Pancreas (tissue), 10 donors: ENCODE measurements at regions of chr18 and their contacts with region 1.

Region 1: DNA sequence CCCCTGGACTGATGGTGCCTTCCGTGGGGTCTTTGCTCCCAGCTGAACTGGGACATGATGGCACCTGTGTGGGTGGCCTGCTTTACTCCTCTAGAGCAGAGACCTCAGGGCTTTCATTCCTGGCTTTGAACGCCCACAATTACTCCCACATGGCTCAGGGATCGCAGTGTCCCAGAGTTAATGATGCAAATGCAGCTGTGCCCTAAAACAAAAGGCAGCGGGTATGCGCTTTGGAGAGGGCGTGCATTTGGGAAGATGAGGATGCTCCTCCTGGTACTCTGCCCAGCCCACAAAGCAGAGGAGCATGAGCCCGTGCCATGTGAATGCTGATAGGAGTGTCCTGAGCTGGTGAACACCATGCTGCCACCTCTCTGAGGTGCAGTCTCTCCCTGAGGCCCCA is 173.4 kb downstream of the FHOD3 start:
- DNase-seq: no peak
- ATAC-seq: no peak
- H3K4me3 ChIP-seq: no peak overlapping the region
- H3K27ac ChIP-seq: no peak overlapping the region
- H3K4me1 ChIP-seq: peaks cover 0 to 17% (median 8%) of the 10 kb centered on the region in 3 donors
- H3K27me3 ChIP-seq: no peaks in the 10 kb centered on the region
- CTCF ChIP-seq: no peak

Region 2: GRCh38 chr18:36212301-36213171 is 258.4 kb before region 1 on chr18:
- intact Hi-C with region 1: no loop called
- DNase-seq: no peak
- ATAC-seq: no peak
- H3K4me3 ChIP-seq: no peak overlapping the region
- H3K27ac ChIP-seq: no peak overlapping the region
- H3K4me1 ChIP-seq: no peaks in the 10 kb centered on the region
- H3K27me3 ChIP-seq: no peaks in the 10 kb centered on the region
- CTCF ChIP-seq: no peak

Region 3: GRCh38 chr18:36411745-36412168 is 59.1 kb before region 1 on chr18:
- intact Hi-C with region 1: no loop called
- DNase-seq: no peak
- ATAC-seq: peak in 1 of 4 donors; percentile 69
- H3K4me3 ChIP-seq: no peak overlapping the region
- H3K27ac ChIP-seq: no peak overlapping the region
- H3K4me1 ChIP-seq: no peaks in the 10 kb centered on the region
- H3K27me3 ChIP-seq: no peaks in the 10 kb centered on the region
- CTCF ChIP-seq: no peak

Region 4: DNA sequence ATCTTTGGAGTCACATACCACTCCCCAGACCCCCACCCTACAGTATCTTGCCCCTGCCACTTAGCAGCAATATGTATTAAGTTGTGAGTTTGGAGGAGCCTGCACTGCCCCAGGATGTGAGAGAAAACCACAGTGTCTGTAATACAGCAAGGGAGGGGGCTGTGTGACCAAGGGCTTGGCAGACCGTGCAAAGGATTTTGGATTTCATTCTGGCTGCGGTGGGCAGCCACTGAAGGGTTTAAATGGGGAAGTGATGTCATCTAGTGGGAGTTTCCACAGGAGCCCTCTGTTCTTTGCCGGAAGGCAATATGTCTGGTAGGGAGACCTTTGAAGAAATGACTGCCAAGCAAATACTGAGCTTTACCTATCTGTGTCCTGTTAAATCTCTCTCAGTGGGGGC is 29.0 kb after region 1 on chr18:
- intact Hi-C with region 1: no loop called
- DNase-seq: no peak
- ATAC-seq: no peak
- H3K4me3 ChIP-seq: no peak overlapping the region
- H3K27ac ChIP-seq: no peak overlapping the region
- H3K4me1 ChIP-seq: no peaks in the 10 kb centered on the region
- H3K27me3 ChIP-seq: no peaks in the 10 kb centered on the region
- CTCF ChIP-seq: no peak

Region 5: GRCh38 chr18:36527740-36528455 is 57.0 kb after region 1 on chr18:
- intact Hi-C with region 1: loop called in 1 of 3 experiments (anchors 10 kb)
- DNase-seq: no peak
- ATAC-seq: no peak
- H3K4me3 ChIP-seq: no peak overlapping the region
- H3K27ac ChIP-seq: no peak overlapping the region
- H3K4me1 ChIP-seq: no peaks in the 10 kb centered on the region
- H3K27me3 ChIP-seq: no peaks in the 10 kb centered on the region
- CTCF ChIP-seq: no peak

Region 6: DNA sequence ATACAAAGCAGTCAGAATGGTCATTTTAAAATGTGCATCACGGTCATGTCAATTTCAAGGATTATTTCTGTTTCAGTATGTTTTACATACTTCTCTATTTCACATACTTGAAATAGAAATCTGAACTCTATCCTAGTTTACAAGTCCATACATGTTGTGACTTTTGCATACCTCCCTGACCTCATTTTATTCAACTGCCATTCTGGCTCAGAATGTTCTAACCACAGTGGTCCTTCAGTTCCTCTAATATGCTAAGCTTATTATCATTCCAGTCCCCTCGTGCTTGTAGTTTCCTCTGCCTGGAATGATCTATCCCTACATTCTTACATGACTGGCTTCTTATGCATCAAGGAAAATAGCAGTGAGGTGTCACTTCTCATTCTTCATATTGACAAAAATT is 653.6 kb after region 1 on chr18:
- intact Hi-C with region 1: no loop called
- DNase-seq: no peak
- ATAC-seq: no peak
- H3K4me3 ChIP-seq: no peak overlapping the region
- H3K27ac ChIP-seq: no peak overlapping the region
- H3K4me1 ChIP-seq: no peaks in the 10 kb centered on the region
- H3K27me3 ChIP-seq: no peaks in the 10 kb centered on the region
- CTCF ChIP-seq: no peak